ENCODE measurements at regions of chr4 and their contacts with region 1.

Region 1: DNA sequence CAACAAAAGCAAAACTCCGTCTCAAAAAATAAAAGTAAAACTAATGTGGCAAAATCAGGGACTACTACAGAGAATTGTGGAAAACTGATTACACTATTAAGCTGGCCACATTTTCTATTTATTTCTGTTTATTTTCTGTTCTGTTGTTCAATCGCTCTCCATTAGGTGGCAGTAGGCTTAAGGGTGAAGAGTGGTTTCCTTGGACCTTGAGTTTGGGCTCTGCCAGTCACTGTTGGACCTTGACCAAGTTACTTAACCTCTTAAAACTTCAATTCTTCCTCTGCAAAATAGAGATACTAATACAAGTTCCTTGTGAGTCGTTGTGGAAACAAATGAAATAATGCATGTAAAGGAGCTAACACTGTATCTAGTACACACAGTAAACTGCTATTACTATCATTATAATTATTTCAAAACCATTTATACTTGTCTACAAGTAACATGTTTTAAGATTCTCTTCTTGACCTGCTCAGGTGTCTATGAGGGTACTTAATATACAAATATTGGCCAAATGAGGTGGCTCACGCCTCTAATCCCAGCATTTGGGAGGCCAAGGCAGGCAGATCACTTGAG is 15.2 kb downstream of the HSD17B11 start:
- DNase-seq: peak; percentile 47
- H3K4me3 ChIP-seq: no peak overlapping the region
- H3K27ac ChIP-seq: peak overlapping the region in 1 of 2 experiments; percentile 56; a peak in 1 of 4 replicates
- H3K4me1 ChIP-seq: no peaks in the 10 kb centered on the region
- H3K27me3 ChIP-seq: no peaks in the 10 kb centered on the region
- CTCF ChIP-seq: peak; percentile 89
- EP300 ChIP-seq: no peak
- RAD21 ChIP-seq: peak; percentile 85

Region 2: DNA sequence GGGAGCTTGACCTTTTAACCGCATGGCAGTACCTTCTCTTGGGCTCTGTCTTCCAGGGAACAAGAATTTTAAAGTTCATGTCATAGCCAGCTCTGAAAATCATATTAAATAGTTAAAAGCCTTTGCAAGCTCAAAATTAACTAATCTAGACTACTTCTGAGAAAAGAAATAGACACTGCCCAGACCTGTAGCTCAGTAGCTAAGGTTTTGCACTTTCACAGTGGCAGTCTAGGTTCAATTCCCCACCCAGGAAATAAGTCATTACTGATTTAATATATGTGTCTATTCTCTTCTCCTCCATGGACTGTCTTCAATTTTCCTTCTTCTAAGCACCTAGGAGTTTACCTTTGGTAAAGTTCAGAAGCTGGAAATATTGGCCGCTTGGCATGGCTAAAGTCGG is 12.2 kb before region 1 on chr4:
- CTCF ChIA-PET with region 1: interaction called, 25 read pairs
- POLR2A ChIA-PET with region 1: no interaction called
- DNase-seq: no peak
- H3K4me3 ChIP-seq: no peak overlapping the region
- H3K27ac ChIP-seq: no peak overlapping the region
- H3K4me1 ChIP-seq: no peaks in the 10 kb centered on the region
- H3K27me3 ChIP-seq: no peaks in the 10 kb centered on the region
- CTCF ChIP-seq: no peak
- EP300 ChIP-seq: no peak
- RAD21 ChIP-seq: no peak

Region 3: DNA sequence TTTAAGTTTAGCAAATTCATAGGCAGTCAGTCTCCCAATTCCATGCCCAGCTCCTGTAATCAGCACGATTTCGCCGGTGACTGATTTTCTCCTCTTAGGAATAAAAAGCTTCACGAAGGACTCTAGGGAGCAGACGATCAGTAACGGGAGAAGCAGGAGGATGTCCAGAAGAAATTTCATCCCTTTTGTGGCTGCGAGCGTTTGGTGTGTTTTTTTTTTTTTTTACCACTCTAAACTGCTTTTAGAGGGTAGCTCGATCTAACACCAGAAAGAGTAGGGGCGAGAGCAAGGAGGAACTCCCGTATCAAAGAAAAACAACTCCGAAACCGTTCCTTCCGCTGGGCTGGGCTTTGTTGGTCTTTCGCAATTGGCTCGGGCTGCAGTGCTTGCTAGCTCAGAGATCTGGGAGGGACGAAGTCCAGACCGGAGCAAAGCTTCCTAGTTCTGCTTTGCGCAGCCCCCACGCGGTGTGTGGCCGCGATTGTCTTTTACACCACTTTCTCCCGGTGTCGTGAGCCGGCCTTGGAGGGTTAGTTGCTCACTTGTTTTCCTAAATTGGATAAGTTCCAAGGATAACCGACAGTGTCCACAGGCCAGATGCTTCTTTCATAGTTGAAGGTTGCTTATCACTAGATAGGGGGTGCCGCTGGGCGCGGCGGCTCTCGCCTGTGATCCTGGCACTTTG is 15.2 kb after region 1 on chr4 and contains the start of gene HSD17B11:
- CTCF ChIA-PET with region 1: interaction called, 53 read pairs
- POLR2A ChIA-PET with region 1: interaction called, 5 read pairs
- DNase-seq: peak; percentile 90
- H3K4me3 ChIP-seq: peak within 1 kb of the TSS; percentile 69 to 80
- H3K27ac ChIP-seq: peak within 1 kb of the TSS; percentile 83 to 96
- H3K4me1 ChIP-seq: peaks cover 0 to 4% of the 10 kb centered on the region in 2 experiments; a peak in 1 of 4 replicates
- H3K27me3 ChIP-seq: no peaks in the 10 kb centered on the region
- CTCF ChIP-seq: peak; percentile 36; the same call in 1 of the 2 replicates
- EP300 ChIP-seq: no peak
- RAD21 ChIP-seq: peak; percentile 23
- polyA plus RNA-seq, gene HSD17B11: 13.2 and 17.7 TPM in 2 replicates

Region 4: GRCh38 chr4:87465739-87466366 is 90.0 kb after region 1 on chr4:
- CTCF ChIA-PET with region 1: interaction called, 75 read pairs
- POLR2A ChIA-PET with region 1: no interaction called
- DNase-seq: peak; percentile 41
- H3K4me3 ChIP-seq: no peak overlapping the region; a peak in 1 of 4 replicates
- H3K27ac ChIP-seq: no peak overlapping the region
- H3K4me1 ChIP-seq: no peaks in the 10 kb centered on the region
- H3K27me3 ChIP-seq: no peaks in the 10 kb centered on the region
- CTCF ChIP-seq: peak; percentile 79
- EP300 ChIP-seq: no peak
- RAD21 ChIP-seq: peak; percentile 84

Region 5: GRCh38 chr4:87624698-87625097 is 248.9 kb after region 1 on chr4:
- CTCF ChIA-PET with region 1: no interaction called
- POLR2A ChIA-PET with region 1: no interaction called
- DNase-seq: no peak
- H3K4me3 ChIP-seq: no peak overlapping the region
- H3K27ac ChIP-seq: no peak overlapping the region
- H3K4me1 ChIP-seq: no peaks in the 10 kb centered on the region
- H3K27me3 ChIP-seq: no peaks in the 10 kb centered on the region; the same call in 1 of the 2 replicates
- CTCF ChIP-seq: no peak
- EP300 ChIP-seq: no peak
- RAD21 ChIP-seq: no peak

Measured in SK-N-SH (cell line).